ENCODE measurements at regions of chr12 and their contacts with region 1.

Region 1: GRCh38 chr12:503111-503761 is 43.5 kb downstream of the B4GALNT3 start:
- DNase-seq: peak; percentile 86 to 95
- H3K4me3 ChIP-seq: peak overlapping the region; percentile 11; the same call in 1 of the 2 replicates
- H3K4me3 Mint-ChIP-seq: peak overlapping the region; percentile 71
- H3K27ac Mint-ChIP-seq: peak overlapping the region; percentile 85
- H3K4me1 ChIP-seq: peaks cover 66% of the 10 kb centered on the region
- H3K4me1 Mint-ChIP-seq: peaks cover 40% of the 10 kb centered on the region
- H3K27me3 ChIP-seq: no peaks in the 10 kb centered on the region
- H3K27me3 Mint-ChIP-seq: no peaks in the 10 kb centered on the region
- CTCF ChIP-seq: no peak

Region 2: DNA sequence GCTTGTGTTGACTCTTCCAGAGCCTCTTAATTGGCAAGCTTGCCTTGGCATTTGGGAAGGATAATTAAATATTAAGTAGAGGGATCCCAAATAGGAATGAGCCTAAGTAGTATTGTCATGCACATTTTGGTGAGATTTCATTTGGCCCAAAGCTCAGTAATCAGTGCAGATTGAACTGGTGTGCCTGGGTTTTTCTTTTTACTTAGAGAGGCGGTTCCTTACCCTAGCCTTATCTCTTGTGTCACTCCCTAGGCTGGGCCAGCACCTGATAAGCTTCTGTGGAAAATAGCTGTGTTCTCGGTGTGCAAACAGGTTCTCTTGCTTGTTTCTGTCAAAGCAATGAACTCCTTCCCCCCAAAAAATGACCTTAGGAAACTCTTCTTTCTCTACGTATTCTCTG is 52.8 kb before region 1 on chr12:
- CTCF ChIA-PET with region 1: interaction called, 8 read pairs
- POLR2A ChIA-PET with region 1: interaction called, 3 read pairs
- intact Hi-C with region 1: loop called (anchors 2 kb)
- DNase-seq: peak; percentile 70 to 72
- H3K4me3 ChIP-seq: no peak overlapping the region
- H3K4me3 Mint-ChIP-seq: no peak overlapping the region
- H3K27ac Mint-ChIP-seq: no peak overlapping the region
- H3K4me1 ChIP-seq: peaks cover 15% of the 10 kb centered on the region
- H3K4me1 Mint-ChIP-seq: peaks cover 11% of the 10 kb centered on the region
- H3K27me3 ChIP-seq: no peaks in the 10 kb centered on the region
- H3K27me3 Mint-ChIP-seq: no peaks in the 10 kb centered on the region
- CTCF ChIP-seq: no peak

Region 3: DNA sequence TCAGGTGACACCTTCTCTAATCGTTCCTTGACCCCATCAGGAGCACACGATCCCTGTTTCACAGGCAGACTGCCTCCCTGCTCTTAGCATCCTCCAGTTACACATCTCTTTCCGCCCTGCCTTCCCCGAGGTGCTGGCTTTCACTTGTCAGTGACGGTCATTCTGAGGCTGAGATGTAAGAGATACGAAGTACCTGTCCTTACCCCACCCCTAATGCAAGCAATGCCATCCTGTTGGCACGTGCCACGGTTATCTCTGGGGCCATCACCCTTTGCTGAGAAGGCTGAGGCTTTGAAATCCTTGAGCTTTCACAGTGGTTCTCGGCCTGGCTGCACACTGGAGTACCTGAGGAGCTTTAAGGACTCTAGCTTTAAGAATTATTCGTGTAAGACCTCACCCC is 19.1 kb before region 1 on chr12:
- CTCF ChIA-PET with region 1: interaction called, 7 read pairs
- POLR2A ChIA-PET with region 1: no interaction called
- intact Hi-C with region 1: loop called (anchors 2 kb)
- DNase-seq: no peak
- H3K4me3 ChIP-seq: no peak overlapping the region
- H3K4me3 Mint-ChIP-seq: no peak overlapping the region
- H3K27ac Mint-ChIP-seq: peak overlapping the region; percentile 36
- H3K4me1 ChIP-seq: peaks cover 16% of the 10 kb centered on the region
- H3K4me1 Mint-ChIP-seq: peaks cover 35% of the 10 kb centered on the region
- H3K27me3 ChIP-seq: no peaks in the 10 kb centered on the region
- H3K27me3 Mint-ChIP-seq: no peaks in the 10 kb centered on the region
- CTCF ChIP-seq: no peak

Region 4: DNA sequence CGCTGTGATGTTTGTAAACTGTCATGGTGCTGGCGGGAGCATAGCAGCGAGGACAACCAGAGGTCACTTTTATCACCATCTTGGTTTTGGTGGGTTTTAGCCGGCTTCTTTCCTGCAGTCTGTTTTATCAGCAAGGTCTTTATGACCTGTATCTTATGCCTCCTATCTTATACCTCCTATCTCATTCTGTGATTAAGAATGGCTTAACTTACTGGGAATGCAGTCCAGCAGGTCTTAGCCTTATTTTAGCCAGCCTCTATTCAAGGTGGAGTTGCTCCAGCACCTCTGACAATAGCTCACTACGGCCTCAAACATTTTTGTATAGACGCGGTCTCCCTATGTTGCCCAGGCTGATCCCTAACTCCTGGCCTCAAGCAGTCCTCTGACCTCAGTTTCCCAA is 10.2 kb after region 1 on chr12:
- CTCF ChIA-PET with region 1: interaction called, 8 read pairs
- POLR2A ChIA-PET with region 1: interaction called, 4 read pairs
- intact Hi-C with region 1: loop called (anchors 1 kb)
- DNase-seq: peak; percentile 88 to 91
- H3K4me3 ChIP-seq: no peak overlapping the region
- H3K4me3 Mint-ChIP-seq: peak overlapping the region; percentile 54
- H3K27ac Mint-ChIP-seq: peak overlapping the region; percentile 94
- H3K4me1 ChIP-seq: peaks cover 74% of the 10 kb centered on the region
- H3K4me1 Mint-ChIP-seq: peaks cover 49% of the 10 kb centered on the region
- H3K27me3 ChIP-seq: no peaks in the 10 kb centered on the region
- H3K27me3 Mint-ChIP-seq: no peaks in the 10 kb centered on the region
- CTCF ChIP-seq: no peak

Region 5: GRCh38 chr12:532908-533565 is 29.8 kb after region 1 on chr12:
- CTCF ChIA-PET with region 1: interaction called, 4 read pairs
- POLR2A ChIA-PET with region 1: interaction called, 5 read pairs
- intact Hi-C with region 1: loop called (anchors 2 kb)
- DNase-seq: peak in 1 of 2 experiments; percentile 44
- H3K4me3 ChIP-seq: no peak overlapping the region
- H3K4me3 Mint-ChIP-seq: no peak overlapping the region
- H3K27ac Mint-ChIP-seq: peak overlapping the region; percentile 82
- H3K4me1 ChIP-seq: peaks cover 15% of the 10 kb centered on the region
- H3K4me1 Mint-ChIP-seq: peaks cover 26% of the 10 kb centered on the region
- H3K27me3 ChIP-seq: no peaks in the 10 kb centered on the region
- H3K27me3 Mint-ChIP-seq: no peaks in the 10 kb centered on the region
- CTCF ChIP-seq: no peak

Region 6: GRCh38 chr12:546921-547845 is 43.9 kb after region 1 on chr12:
- CTCF ChIA-PET with region 1: interaction called, 3 read pairs
- POLR2A ChIA-PET with region 1: no interaction called
- intact Hi-C with region 1: loop called (anchors 2 kb)
- DNase-seq: peak; percentile 80 to 91
- H3K4me3 ChIP-seq: no peak overlapping the region
- H3K4me3 Mint-ChIP-seq: no peak overlapping the region
- H3K27ac Mint-ChIP-seq: peak overlapping the region; percentile 1
- H3K4me1 ChIP-seq: peaks cover 12% of the 10 kb centered on the region
- H3K4me1 Mint-ChIP-seq: peaks cover 13% of the 10 kb centered on the region
- H3K27me3 ChIP-seq: no peaks in the 10 kb centered on the region
- H3K27me3 Mint-ChIP-seq: no peaks in the 10 kb centered on the region
- CTCF ChIP-seq: peak; percentile 99 to 100

Measured in Caco-2 (cell line).